ENCODE measurements at regions of chr6 and their contacts with region 1.

Region 1: DNA sequence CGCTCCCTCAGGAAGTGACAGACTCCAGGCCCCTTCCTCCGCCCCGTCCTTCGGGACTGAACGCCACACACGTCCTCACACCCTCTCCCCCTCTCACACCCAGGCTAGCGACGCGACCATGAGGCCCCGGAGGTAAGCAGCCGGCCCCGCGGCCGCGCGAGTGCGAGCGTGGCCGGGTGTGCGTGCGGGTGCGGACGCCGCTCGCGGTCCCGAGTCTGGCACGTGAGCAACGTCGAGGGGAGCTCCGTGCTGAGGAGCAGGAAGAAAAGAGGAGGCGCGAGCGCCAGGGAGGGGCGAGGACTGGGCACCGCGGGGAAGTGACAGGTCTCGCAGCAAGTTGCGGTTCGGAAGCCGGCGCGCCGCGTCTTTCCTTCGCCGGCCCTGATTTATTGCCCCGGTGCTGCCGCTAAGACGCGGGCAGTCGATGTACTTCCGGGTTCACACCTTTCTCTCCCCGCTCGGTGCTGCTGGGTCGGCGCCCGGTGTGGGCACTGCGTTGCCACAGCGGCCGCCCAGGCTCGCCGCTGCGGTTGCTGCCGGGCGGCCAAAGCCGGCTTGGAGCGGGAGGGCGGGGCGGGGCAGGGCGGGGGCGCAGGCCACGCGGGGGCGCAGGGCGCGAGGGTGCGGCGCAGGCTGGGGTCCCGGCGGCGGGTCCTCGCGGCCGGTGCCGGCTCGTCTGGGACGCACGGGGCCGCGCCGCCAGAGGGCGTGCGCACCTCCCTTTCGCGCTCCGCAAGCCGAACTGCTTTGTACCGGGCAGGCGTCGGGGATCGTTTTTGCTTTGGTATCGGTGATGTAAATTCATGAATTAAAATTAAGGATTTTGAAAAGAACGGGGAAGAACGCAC is 15.8 kb upstream of the LIN28B start:
- DNase-seq: peak; percentile 74
- H3K4me3 ChIP-seq: peak overlapping the region; percentile 52
- H3K27ac ChIP-seq: no peak overlapping the region
- H3K4me1 ChIP-seq: no peaks in the 10 kb centered on the region
- H3K27me3 ChIP-seq: no peaks in the 10 kb centered on the region
- CTCF ChIP-seq: peak; percentile 66

Region 2: GRCh38 chr6:104789770-104790190 is 151.3 kb before region 1 on chr6:
- CTCF ChIA-PET with region 1: no interaction called
- POLR2A ChIA-PET with region 1: no interaction called
- intact Hi-C with region 1: loop called (anchors 10 kb)
- DNase-seq: peak; percentile 52
- H3K4me3 ChIP-seq: no peak overlapping the region
- H3K27ac ChIP-seq: no peak overlapping the region
- H3K4me1 ChIP-seq: peaks cover 7% of the 10 kb centered on the region
- H3K27me3 ChIP-seq: no peaks in the 10 kb centered on the region
- CTCF ChIP-seq: peak; percentile 63

Region 3: GRCh38 chr6:105424175-105424783 is 483.2 kb after region 1 on chr6:
- CTCF ChIA-PET with region 1: no interaction called
- POLR2A ChIA-PET with region 1: no interaction called
- intact Hi-C with region 1: loop called (anchors 10 kb)
- DNase-seq: peak; percentile 77
- H3K4me3 ChIP-seq: no peak overlapping the region
- H3K27ac ChIP-seq: no peak overlapping the region
- H3K4me1 ChIP-seq: no peaks in the 10 kb centered on the region
- H3K27me3 ChIP-seq: no peaks in the 10 kb centered on the region
- CTCF ChIP-seq: peak; percentile 82

Measured in A673 (cell line).